Right ventricle myocardium superior (tissue), 1 donor: ENCODE measurements at regions of chr3 and their contacts with region 1.

Region 1: GRCh38 chr3:58630076-58630709 is 36.4 kb downstream of the FAM3D start:
- DNase-seq: no peak
- ATAC-seq: peak; percentile 37

Region 2: DNA sequence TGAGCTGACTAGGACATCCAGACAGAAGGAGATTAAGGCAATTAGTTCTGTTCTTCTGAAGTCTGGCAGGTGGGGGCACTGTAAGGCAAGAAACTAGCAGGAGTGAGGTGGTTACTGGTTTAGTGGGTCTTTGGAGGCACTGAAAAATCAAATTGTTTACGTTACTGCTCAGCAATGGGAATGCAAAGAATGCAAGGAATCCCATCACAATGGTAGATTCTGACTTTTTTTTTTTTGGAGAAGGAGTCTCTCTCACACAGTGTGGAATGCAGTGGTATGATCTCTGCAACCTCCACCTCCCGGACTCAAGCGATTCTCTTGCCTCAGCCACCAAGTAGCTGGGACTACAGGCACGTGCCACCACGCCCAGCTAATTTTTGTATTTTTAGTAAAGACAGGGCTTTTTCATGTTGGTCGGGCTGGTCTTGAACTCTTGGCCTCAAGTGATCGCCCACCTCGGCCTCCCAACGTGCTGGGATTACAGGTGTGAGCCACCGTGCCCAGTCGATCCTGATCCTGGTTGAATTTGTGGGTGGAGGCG is 69.4 kb before region 1 on chr3:
- intact Hi-C with region 1: loop called (anchors 2 kb)
- DNase-seq: no peak
- ATAC-seq: peak; percentile 54

Region 3: DNA sequence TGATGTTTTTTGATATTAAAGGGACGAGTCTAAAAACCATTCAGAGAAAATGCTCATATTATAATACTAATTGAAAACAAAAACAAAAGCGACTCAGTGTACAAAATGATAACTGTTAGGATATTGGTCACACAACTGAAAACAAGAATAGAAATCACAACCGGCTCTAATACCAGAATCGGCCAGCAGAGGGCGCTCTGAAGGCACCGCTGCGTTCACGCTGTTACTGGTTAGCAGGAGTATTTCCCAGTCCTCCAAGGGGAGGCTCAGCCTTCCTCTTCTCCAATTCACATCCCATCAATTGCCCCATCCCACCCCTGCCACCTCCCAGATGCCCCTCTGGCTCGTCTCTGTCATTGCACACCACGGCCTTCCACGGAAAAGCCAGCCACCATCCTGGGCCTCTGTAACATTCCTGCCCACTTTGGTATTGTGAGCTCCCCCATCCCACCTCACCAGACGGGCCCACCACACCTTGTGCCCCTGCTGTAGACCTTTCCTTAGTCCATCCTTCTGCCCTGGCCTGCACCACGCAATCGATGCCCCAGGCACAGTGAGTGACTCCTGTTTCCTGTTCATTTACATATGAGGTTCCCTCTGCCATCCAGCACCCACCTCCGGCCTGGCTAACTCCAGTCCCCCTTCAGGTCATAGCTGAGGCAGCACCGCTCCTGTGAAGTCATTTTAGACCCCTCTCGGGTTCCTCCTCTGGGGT is 61.5 kb before region 1 on chr3:
- intact Hi-C with region 1: loop called (anchors 2 kb)
- DNase-seq: peak; percentile 88
- ATAC-seq: peak; percentile 74

Region 4: DNA sequence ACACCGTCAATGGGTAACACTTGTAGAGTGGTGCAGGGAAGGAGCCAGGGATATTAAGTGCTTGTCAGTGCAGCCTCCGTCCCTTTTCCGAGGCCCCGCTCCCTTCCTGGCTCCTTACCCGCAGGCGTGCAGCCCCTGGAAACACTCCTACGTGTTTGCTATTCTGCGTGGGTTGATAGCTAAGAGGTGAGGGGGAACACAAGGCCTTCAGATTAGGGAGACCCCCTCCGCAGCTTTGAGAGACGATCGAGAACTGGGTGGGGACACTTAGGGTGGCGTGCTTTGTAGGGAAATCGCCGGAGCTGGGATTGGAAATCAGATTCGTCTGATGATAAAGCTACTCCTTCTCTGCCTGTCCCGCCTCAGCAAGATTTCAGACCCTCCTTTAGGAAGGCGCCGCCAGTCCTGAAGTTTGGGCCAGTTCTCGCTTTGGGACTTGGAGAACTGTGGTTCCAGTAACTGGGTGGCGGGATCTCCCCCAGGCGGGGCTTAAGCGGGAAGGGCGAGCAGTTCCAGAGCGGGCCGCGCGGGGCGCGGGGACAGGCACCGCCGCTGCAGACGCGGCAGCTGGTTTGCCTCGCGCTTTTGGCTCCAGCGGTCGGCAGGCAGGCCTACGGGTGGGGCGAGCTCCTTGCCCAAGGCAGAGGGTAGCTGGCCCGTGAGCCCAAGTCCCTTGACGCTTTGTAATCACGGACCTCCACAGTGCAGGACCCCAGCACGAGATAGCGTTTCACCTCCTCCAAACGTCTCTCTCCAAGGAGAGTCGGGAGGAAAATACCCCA is 45.0 kb before region 1 on chr3:
- intact Hi-C with region 1: loop called (anchors 5 kb)
- DNase-seq: peak; percentile 94
- ATAC-seq: peak; percentile 95